ENCODE measurements at regions of chr11 and their contacts with region 1.

Region 1: GRCh38 chr11:65888163-65888814 is at the start of gene FIBP:
- DNase-seq: peak; percentile 84 to 95 (median 90)
- ATAC-seq: peak; percentile 74
- H3K4me3 ChIP-seq: peak within 1 kb of the TSS; percentile 84
- H3K4me3 Mint-ChIP-seq: peak within 1 kb of the TSS; percentile 88 to 97 (median 93)
- H3K27ac ChIP-seq: peak within 1 kb of the TSS; percentile 92
- H3K27ac Mint-ChIP-seq: peak within 1 kb of the TSS; percentile 93 to 99 (median 97)
- H3K4me1 ChIP-seq: peaks cover 37 to 45% of the 10 kb centered on the region in 2 donors
- H3K4me1 Mint-ChIP-seq: peaks cover 50 to 69% (median 53%) of the 10 kb centered on the region in 7 donors
- H3K27me3 ChIP-seq: no peaks in the 10 kb centered on the region
- H3K27me3 Mint-ChIP-seq: no peaks in the 10 kb centered on the region
- total RNA-seq, gene FIBP: 25.9 to 72.1 (median 43.4) TPM

Region 2: DNA sequence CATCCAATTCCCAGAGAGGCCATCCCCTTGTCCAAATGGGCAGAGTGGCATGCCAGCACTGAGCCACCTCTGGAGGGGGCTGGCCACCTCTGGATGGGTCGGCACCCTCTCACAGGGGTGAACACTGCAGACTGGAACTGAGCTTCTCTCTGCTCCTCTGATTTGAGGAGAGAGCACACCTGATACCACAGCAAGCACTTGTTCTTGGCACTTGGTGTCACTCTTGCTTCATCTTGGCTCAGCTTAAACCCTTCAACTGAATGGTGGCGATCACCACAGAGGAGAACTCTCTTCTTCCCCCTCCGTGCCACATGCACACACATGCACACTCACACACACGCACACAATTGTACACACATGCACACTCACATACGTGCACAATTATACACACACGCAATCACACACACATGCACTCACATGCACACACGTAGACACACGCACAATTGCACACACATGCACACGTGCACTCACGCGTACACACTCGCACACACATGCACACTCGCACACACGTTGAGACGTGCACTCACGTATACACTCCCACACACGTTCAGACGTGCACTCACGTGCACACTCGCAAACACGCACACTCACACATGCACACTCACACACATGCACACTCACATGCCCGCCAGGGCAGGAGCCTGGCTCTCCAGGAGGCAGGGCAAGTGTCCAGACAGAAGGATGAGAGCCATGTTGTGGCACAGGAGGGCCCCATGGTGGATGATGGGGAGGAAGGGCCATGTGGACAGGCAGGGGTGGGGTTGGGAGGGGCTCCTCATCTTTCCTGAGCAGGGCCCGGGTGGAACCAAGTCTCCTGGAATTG is 78.0 kb before region 1 on chr11:
- CTCF ChIA-PET with region 1: interaction called, 4 read pairs
- POLR2A ChIA-PET with region 1: interaction called, 3 read pairs
- intact Hi-C with region 1: loop called in 1 of 2 experiments (anchors 1 kb)
- DNase-seq: peak in 3 of 9 donors; percentile 27 to 31 (median 29)
- ATAC-seq: peak; percentile 73
- H3K4me3 ChIP-seq: no peak overlapping the region
- H3K4me3 Mint-ChIP-seq: no peak overlapping the region
- H3K27ac ChIP-seq: no peak overlapping the region
- H3K27ac Mint-ChIP-seq: peak overlapping the region in 1 of 9 donors; percentile 59
- H3K4me1 ChIP-seq: no peaks in the 10 kb centered on the region
- H3K4me1 Mint-ChIP-seq: peaks cover 0 to 8% (median 2%) of the 10 kb centered on the region in 7 donors
- H3K27me3 ChIP-seq: no peaks in the 10 kb centered on the region
- H3K27me3 Mint-ChIP-seq: peaks cover 0 to 15% (median 0%) of the 10 kb centered on the region in 5 donors

Region 3: GRCh38 chr11:65868076-65868667 is 20.1 kb before region 1 on chr11:
- CTCF ChIA-PET with region 1: interaction called, 159 read pairs
- POLR2A ChIA-PET with region 1: interaction called, 316 read pairs
- intact Hi-C with region 1: loop called (anchors 1 to 2 kb)
- DNase-seq: peak in 3 of 9 donors; percentile 28 to 45 (median 31)
- ATAC-seq: peak; percentile 62
- H3K4me3 ChIP-seq: no peak overlapping the region
- H3K4me3 Mint-ChIP-seq: no peak overlapping the region
- H3K27ac ChIP-seq: no peak overlapping the region
- H3K27ac Mint-ChIP-seq: peak overlapping the region in 2 of 9 donors; percentile 56 to 59
- H3K4me1 ChIP-seq: peaks cover 8 to 10% of the 10 kb centered on the region in 2 donors
- H3K4me1 Mint-ChIP-seq: peaks cover 11 to 21% (median 14%) of the 10 kb centered on the region in 7 donors
- H3K27me3 ChIP-seq: no peaks in the 10 kb centered on the region
- H3K27me3 Mint-ChIP-seq: peaks cover 0 to 3% (median 0%) of the 10 kb centered on the region in 5 donors

Region 4: DNA sequence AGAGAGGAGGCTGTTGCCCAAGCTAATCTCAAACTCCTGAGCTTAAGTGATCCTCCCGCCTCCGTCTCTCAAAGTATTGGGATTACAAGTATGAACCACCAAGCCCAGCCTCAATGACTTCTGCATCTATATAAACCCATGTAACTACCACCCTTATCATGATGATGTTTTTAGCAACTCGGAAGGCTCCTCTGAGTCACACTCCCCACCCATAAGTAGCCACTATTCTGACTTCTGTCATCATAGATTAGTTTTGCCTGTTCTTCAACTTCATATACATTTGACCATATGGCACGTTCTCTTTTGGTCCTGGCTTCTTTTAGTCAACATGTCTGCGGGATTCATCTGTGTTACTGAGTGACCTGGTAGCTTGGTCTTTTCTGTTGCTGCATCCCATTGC is 18.3 kb after region 1 on chr11:
- CTCF ChIA-PET with region 1: interaction called, 10 read pairs
- POLR2A ChIA-PET with region 1: interaction called, 108 read pairs
- intact Hi-C with region 1: no loop called
- DNase-seq: no peak
- ATAC-seq: no peak
- H3K4me3 ChIP-seq: no peak overlapping the region
- H3K4me3 Mint-ChIP-seq: no peak overlapping the region
- H3K27ac ChIP-seq: no peak overlapping the region
- H3K27ac Mint-ChIP-seq: no peak overlapping the region
- H3K4me1 ChIP-seq: no peaks in the 10 kb centered on the region
- H3K4me1 Mint-ChIP-seq: peaks cover 0 to 18% (median 3%) of the 10 kb centered on the region in 7 donors
- H3K27me3 ChIP-seq: no peaks in the 10 kb centered on the region
- H3K27me3 Mint-ChIP-seq: peaks cover 0 to 24% (median 5%) of the 10 kb centered on the region in 5 donors

Region 5: GRCh38 chr11:65927904-65928397 is 39.7 kb after region 1 on chr11:
- CTCF ChIA-PET with region 1: interaction called, 7 read pairs
- POLR2A ChIA-PET with region 1: interaction called, 54 read pairs
- intact Hi-C with region 1: loop called (anchors 1 kb)
- DNase-seq: peak in 8 of 9 donors; percentile 64 to 86 (median 80)
- ATAC-seq: peak; percentile 96
- H3K4me3 ChIP-seq: peak overlapping the region; percentile 78
- H3K4me3 Mint-ChIP-seq: peak overlapping the region; percentile 74 to 89 (median 81)
- H3K27ac ChIP-seq: peak overlapping the region; percentile 81
- H3K27ac Mint-ChIP-seq: peak overlapping the region; percentile 92 to 98 (median 96)
- H3K4me1 ChIP-seq: peaks cover 20 to 30% of the 10 kb centered on the region in 2 donors
- H3K4me1 Mint-ChIP-seq: peaks cover 31 to 47% (median 36%) of the 10 kb centered on the region in 7 donors
- H3K27me3 ChIP-seq: no peaks in the 10 kb centered on the region
- H3K27me3 Mint-ChIP-seq: no peaks in the 10 kb centered on the region

Region 6: DNA sequence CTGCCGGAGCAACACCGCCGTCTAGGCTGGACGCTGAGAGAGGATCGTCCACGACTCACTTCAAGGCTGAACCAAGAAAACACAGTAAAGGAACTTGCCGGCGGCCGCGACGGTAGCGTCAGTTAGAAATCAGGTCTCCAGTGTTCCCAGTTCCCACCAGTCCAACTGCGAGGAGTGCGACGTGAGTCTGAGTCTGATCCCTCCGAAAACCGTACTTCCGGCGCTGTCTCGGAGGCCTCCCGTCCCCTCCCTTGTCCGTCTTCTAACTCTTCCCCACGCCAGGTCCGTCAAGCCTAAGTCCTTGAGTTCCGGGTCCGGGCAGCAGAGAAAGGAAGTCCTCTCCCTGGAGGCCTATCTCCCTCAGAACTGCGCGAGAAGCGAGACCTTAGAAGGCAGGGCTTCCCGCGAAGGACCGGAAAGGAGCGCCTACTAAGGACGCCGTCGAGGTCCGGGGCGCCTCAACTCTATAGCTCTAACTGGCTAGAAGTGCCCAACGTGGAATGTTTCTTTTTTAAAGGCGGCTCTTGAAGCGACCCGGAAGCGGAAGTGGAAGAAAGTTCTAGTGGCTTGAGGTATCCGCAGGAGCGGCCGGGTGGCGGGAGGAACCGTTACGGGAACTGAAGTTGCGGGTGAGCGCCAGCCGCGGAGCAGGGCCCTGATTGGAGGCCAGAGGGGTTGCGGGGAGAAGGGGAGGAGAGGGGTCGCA is 113.8 kb after region 1 on chr11 and contains the starts of genes BANF1 and EIF1AD:
- CTCF ChIA-PET with region 1: interaction called, 4 read pairs
- POLR2A ChIA-PET with region 1: interaction called, 15 read pairs
- intact Hi-C with region 1: loop called (anchors 1 kb)
- DNase-seq: peak; percentile 75 to 96 (median 94)
- ATAC-seq: peak; percentile 92
- H3K4me3 ChIP-seq: peak within 1 kb of the TSS; percentile 100
- H3K4me3 Mint-ChIP-seq: peak within 1 kb of the TSS; percentile 97 to 100 (median 99)
- H3K27ac ChIP-seq: peak within 1 kb of the TSS; percentile 92
- H3K27ac Mint-ChIP-seq: peak within 1 kb of the TSS; percentile 96 to 100 (median 98)
- H3K4me1 ChIP-seq: peaks cover 8 to 14% of the 10 kb centered on the region in 2 donors
- H3K4me1 Mint-ChIP-seq: peaks cover 21 to 58% (median 52%) of the 10 kb centered on the region in 7 donors
- H3K27me3 ChIP-seq: no peaks in the 10 kb centered on the region
- H3K27me3 Mint-ChIP-seq: no peaks in the 10 kb centered on the region
- total RNA-seq, gene BANF1: 54.5 to 234 (median 99.4) TPM
- total RNA-seq, gene EIF1AD: 49.9 to 114 (median 66.7) TPM

Region 7: GRCh38 chr11:66268283-66268951 is 380.1 kb after region 1 on chr11 and contains the start of gene RAB1B:
- CTCF ChIA-PET with region 1: no interaction called
- POLR2A ChIA-PET with region 1: no interaction called
- intact Hi-C with region 1: loop called in 1 of 2 experiments (anchors 1 kb)
- DNase-seq: peak; percentile 99 to 100 (median 99)
- ATAC-seq: peak; percentile 89
- H3K4me3 ChIP-seq: peak within 1 kb of the TSS; percentile 91
- H3K4me3 Mint-ChIP-seq: peak within 1 kb of the TSS; percentile 88 to 100 (median 95)
- H3K27ac ChIP-seq: peak within 1 kb of the TSS; percentile 90
- H3K27ac Mint-ChIP-seq: peak within 1 kb of the TSS; percentile 95 to 99 (median 97)
- H3K4me1 ChIP-seq: peaks cover 16 to 38% of the 10 kb centered on the region in 2 donors
- H3K4me1 Mint-ChIP-seq: peaks cover 26 to 48% (median 34%) of the 10 kb centered on the region in 7 donors
- H3K27me3 ChIP-seq: no peaks in the 10 kb centered on the region
- H3K27me3 Mint-ChIP-seq: peaks cover 0 to 3% (median 0%) of the 10 kb centered on the region in 5 donors
- total RNA-seq, gene RAB1B: 60.6 to 151 (median 70.7) TPM